PC-3 (cell line): ENCODE measurements at regions of chr19 and their contacts with region 1.

Region 1: GRCh38 chr19:40662921-40663694 is 27.3 kb downstream of the NUMBL start:
- DNase-seq: peak; percentile 82
- ATAC-seq: peak; percentile 78
- H3K4me3 ChIP-seq: peak overlapping the region; percentile 82
- H3K27ac ChIP-seq: peak overlapping the region; percentile 47
- H3K4me1 ChIP-seq: peaks cover 19% of the 10 kb centered on the region
- H3K27me3 ChIP-seq: no peaks in the 10 kb centered on the region
- CTCF ChIP-seq: peak; percentile 84; the same call in 1 of the 2 replicates

Region 2: DNA sequence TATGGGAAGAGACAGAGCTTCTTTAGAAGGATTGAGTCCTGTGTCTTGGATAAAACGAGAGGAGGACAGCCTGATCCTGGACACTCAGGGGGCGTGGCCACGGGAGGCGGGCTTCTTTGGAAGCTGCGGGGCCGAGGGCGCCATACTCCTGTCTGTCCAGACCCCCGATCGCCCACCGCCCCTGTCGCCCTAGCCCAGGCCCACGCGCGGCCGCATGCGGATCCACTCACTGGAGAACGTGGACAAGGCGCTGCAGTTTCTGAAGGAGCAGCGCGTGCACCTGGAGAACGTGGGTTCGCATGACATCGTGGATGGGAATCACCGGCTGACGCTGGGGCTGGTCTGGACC is 173.3 kb before region 1 on chr19:
- CTCF ChIA-PET with region 1: no interaction called
- POLR2A ChIA-PET with region 1: no interaction called
- intact Hi-C with region 1: no loop called
- DNase-seq: no peak
- ATAC-seq: no peak
- H3K4me3 ChIP-seq: no peak overlapping the region
- H3K27ac ChIP-seq: no peak overlapping the region
- H3K4me1 ChIP-seq: no peaks in the 10 kb centered on the region
- H3K27me3 ChIP-seq: no peaks in the 10 kb centered on the region
- CTCF ChIP-seq: no peak

Region 3: DNA sequence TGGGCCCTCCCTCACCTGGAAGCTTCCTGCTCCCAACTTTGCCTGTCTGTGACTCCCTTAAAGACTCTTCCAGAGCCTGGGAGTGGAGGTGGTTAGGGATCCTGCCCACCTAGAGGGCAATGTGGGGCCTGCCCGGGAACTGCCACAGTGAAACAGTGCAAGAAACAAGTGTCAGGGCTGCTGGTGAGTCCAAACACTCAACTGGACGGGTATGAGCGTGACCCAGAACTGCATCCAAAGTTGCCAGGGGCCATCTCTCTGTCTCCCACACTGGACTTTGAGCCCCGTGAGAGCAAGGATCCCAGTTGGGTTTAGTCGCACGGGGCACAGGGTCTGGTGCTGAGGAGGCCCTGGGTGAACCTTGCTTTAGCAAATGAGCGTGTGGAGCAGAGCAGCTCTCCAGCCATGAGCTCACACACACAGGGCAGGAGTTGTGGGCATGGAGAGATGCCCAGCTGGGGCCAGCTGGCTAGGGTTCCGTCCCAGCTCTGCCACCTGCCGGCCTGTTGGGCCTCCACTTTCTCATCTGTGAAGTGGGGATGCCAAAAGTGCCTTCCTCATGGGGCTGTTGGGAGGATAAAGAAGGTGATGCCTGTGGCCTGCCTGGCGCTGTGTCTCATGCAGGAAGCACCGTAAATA is 30.2 kb after region 1 on chr19:
- CTCF ChIA-PET with region 1: no interaction called
- POLR2A ChIA-PET with region 1: no interaction called
- intact Hi-C with region 1: no loop called
- DNase-seq: no peak
- ATAC-seq: no peak
- H3K4me3 ChIP-seq: no peak overlapping the region
- H3K27ac ChIP-seq: no peak overlapping the region
- H3K4me1 ChIP-seq: peaks cover 24% of the 10 kb centered on the region
- H3K27me3 ChIP-seq: no peaks in the 10 kb centered on the region
- CTCF ChIP-seq: no peak

Region 4: GRCh38 chr19:40716655-40717324 is 53.7 kb after region 1 on chr19 and contains the starts of genes COQ8B and ITPKC:
- CTCF ChIA-PET with region 1: no interaction called
- POLR2A ChIA-PET with region 1: no interaction called
- intact Hi-C with region 1: loop called (anchors 5 kb)
- DNase-seq: peak; percentile 97
- ATAC-seq: peak; percentile 37
- H3K4me3 ChIP-seq: peak within 1 kb of the TSS; percentile 99
- H3K27ac ChIP-seq: peak within 1 kb of the TSS; percentile 100
- H3K4me1 ChIP-seq: peaks cover 27% of the 10 kb centered on the region
- H3K27me3 ChIP-seq: no peaks in the 10 kb centered on the region
- CTCF ChIP-seq: no peak
- total RNA-seq, gene COQ8B: 17.2 and 19.5 TPM in 2 replicates
- total RNA-seq, gene ITPKC: 28.4 and 44.2 TPM in 2 replicates

Region 5: GRCh38 chr19:40762754-40763470 is 99.8 kb after region 1 on chr19:
- CTCF ChIA-PET with region 1: no interaction called
- POLR2A ChIA-PET with region 1: no interaction called
- intact Hi-C with region 1: no loop called
- DNase-seq: no peak
- ATAC-seq: no peak
- H3K4me3 ChIP-seq: no peak overlapping the region
- H3K27ac ChIP-seq: no peak overlapping the region
- H3K4me1 ChIP-seq: no peaks in the 10 kb centered on the region
- H3K27me3 ChIP-seq: no peaks in the 10 kb centered on the region
- CTCF ChIP-seq: no peak

Region 6: GRCh38 chr19:40798223-40798996 is 135.3 kb after region 1 on chr19:
- CTCF ChIA-PET with region 1: no interaction called
- POLR2A ChIA-PET with region 1: no interaction called
- intact Hi-C with region 1: loop called (anchors 10 kb)
- DNase-seq: peak; percentile 96
- ATAC-seq: peak; percentile 82
- H3K4me3 ChIP-seq: peak overlapping the region; percentile 78
- H3K27ac ChIP-seq: peak overlapping the region; percentile 41
- H3K4me1 ChIP-seq: peaks cover 34% of the 10 kb centered on the region
- H3K27me3 ChIP-seq: no peaks in the 10 kb centered on the region
- CTCF ChIP-seq: peak; percentile 47

Region 7: GRCh38 chr19:40815223-40815814 is 152.2 kb after region 1 on chr19:
- CTCF ChIA-PET with region 1: no interaction called
- POLR2A ChIA-PET with region 1: no interaction called
- intact Hi-C with region 1: loop called (anchors 5 kb)
- DNase-seq: no peak
- ATAC-seq: no peak
- H3K4me3 ChIP-seq: no peak overlapping the region
- H3K27ac ChIP-seq: no peak overlapping the region
- H3K4me1 ChIP-seq: no peaks in the 10 kb centered on the region
- H3K27me3 ChIP-seq: no peaks in the 10 kb centered on the region
- CTCF ChIP-seq: no peak